ENCODE measurements at regions of chr13 and their contacts with region 1.

Region 1: GRCh38 chr13:30241532-30241931 is 65.8 kb downstream of the KATNAL1 start:
- DNase-seq: no peak
- ATAC-seq: no peak
- H3K4me3 ChIP-seq: no peak overlapping the region
- H3K27ac ChIP-seq: no peak overlapping the region
- H3K4me1 ChIP-seq: no peaks in the 10 kb centered on the region
- H3K27me3 ChIP-seq: no peaks in the 10 kb centered on the region
- CTCF ChIP-seq: no peak

Region 2: DNA sequence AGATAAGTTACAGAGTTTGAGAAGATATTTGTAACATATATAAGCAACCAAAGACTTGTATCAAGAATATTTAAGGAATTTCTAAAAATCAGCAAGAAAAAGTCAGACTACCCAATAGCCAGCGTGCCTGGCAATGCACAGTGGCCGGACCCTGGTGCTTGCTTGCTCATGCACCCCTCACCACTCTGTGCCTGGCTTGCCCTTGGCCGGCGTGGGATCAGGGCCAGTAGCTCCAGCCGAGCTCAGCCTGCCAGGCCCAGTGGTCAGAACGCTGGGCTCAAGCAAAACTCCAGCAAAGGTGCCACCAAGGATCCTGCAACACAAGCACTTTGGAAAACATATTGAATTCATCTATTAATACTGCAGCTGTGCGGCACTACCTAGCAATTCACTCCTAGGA is 29.3 kb before region 1 on chr13:
- CTCF ChIA-PET with region 1: no interaction called
- POLR2A ChIA-PET with region 1: interaction called, 17 read pairs
- in situ Hi-C with region 1: no loop called
- intact Hi-C with region 1: no loop called
- DNase-seq: no peak
- ATAC-seq: no peak
- H3K4me3 ChIP-seq: no peak overlapping the region
- H3K27ac ChIP-seq: no peak overlapping the region
- H3K4me1 ChIP-seq: no peaks in the 10 kb centered on the region
- H3K27me3 ChIP-seq: no peaks in the 10 kb centered on the region
- CTCF ChIP-seq: no peak

Measured in Panc1 (cell line).